Left lung (tissue), 14 donors: ENCODE measurements at regions of chr1 and their contacts with region 1.

Region 1: DNA sequence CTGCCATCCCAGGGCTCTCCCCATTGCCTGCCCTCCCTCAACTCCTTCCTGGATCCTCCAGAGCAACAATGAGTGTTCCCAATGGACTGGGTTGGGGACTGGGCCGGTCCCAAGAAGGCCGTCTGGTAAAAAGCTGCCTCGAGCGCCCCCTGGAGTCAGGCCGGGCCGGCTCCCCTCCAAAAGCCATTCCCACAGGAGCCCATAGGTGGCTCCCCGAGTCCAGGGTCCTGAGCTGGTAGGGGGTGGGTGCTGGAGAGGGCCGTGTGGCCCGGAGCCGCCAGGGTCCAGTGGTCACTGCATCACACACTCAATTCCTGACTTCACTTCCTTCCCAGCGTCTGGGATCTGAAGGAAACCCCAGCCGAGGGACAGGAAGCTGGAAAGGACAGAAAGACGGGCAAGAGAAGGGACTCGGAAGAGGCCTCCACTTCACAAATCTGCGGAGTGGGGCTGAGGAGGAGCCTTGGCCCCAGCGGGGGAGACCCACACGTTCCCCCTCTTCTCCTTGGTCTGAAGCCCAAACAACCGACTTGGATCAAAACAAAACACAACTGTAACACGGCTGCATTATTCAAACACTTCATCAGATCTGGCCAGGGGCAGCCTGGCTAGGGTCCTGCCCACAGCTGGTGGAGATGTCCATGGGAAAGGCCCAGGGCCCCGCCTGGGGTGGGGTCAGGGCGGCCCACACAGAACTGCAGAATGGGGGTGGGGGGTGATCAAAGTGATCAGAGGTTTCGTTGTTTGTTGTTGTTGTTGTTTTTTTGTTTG is 10.9 kb upstream of the ALDH4A1 start:
- DNase-seq: peak; percentile 74 to 96 (median 80)
- ATAC-seq: peak; percentile 95
- H3K4me3 ChIP-seq: no peak overlapping the region
- H3K27ac ChIP-seq: peak overlapping the region; percentile 41 to 69
- H3K4me1 ChIP-seq: peaks cover 6 to 22% of the 10 kb centered on the region in 2 donors
- H3K27me3 ChIP-seq: no peaks in the 10 kb centered on the region
- CTCF ChIP-seq: peak; percentile 93 to 99

Region 2: GRCh38 chr1:18743233-18743632 is 170.0 kb before region 1 on chr1:
- intact Hi-C with region 1: no loop called
- DNase-seq: no peak
- ATAC-seq: no peak
- H3K4me3 ChIP-seq: no peak overlapping the region
- H3K27ac ChIP-seq: no peak overlapping the region
- H3K4me1 ChIP-seq: no peaks in the 10 kb centered on the region
- H3K27me3 ChIP-seq: peaks cover 0 to 63% of the 10 kb centered on the region in 2 donors
- CTCF ChIP-seq: no peak

Region 3: GRCh38 chr1:18965206-18966173 is 52.2 kb after region 1 on chr1:
- intact Hi-C with region 1: loop called in 1 of 2 experiments (anchors 10 kb)
- DNase-seq: no peak
- ATAC-seq: no peak
- H3K4me3 ChIP-seq: no peak overlapping the region
- H3K27ac ChIP-seq: no peak overlapping the region
- H3K4me1 ChIP-seq: no peaks in the 10 kb centered on the region
- H3K27me3 ChIP-seq: no peaks in the 10 kb centered on the region
- CTCF ChIP-seq: no peak